ENCODE measurements at regions of chr20 and their contacts with region 1.

Region 1: GRCh38 chr20:62010551-62011402 is 54.9 kb downstream of the TAF4 start:
- DNase-seq: peak; percentile 61 to 74 (median 69)
- H3K4me3 ChIP-seq: no peak overlapping the region
- H3K27ac ChIP-seq: no peak overlapping the region
- H3K4me1 ChIP-seq: peaks cover 0 to 5% (median under 1%) of the 10 kb centered on the region in 4 experiments
- H3K27me3 ChIP-seq: no peaks in the 10 kb centered on the region

Region 2: GRCh38 chr20:61628901-61629601 is 381.7 kb before region 1 on chr20:
- CTCF ChIA-PET with region 1: no interaction called
- POLR2A ChIA-PET with region 1: no interaction called
- DNase-seq: no peak
- H3K4me3 ChIP-seq: no peak overlapping the region
- H3K27ac ChIP-seq: no peak overlapping the region
- H3K4me1 ChIP-seq: no peaks in the 10 kb centered on the region
- H3K27me3 ChIP-seq: no peaks in the 10 kb centered on the region

Region 3: DNA sequence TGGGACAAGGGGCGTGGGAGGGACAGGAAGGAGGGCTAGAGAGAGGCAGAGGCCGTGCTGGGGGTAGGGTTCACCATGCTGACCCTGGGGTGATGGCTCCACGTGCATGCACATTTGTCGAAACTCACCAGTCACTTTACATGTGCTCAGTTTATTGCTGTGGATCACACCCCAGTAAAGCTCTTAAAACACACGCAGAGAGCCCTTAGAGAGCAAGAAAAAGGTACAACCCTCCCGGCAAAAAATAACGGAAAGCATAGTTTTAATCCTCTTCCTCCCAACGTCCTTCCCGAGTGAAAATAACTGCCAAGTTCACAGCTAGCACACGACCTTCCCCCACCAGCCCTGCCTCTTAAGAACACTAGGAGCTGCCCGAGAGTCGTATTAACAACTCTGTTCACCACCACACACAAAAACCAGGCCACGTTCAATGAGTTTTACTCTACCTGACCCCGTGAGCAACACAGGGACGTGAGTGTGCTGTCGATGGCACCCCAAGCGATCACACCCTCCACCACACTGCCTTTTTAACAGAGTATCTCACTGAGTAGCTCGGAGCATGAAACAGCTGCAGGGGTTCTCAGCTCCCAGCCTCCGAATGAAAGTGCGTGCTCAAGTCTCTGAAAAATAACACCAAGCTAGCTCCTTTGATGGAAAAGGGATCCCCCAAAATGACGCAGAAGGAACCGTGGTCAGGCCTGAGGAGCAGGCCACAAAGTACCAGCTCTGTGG is 15.2 kb after region 1 on chr20:
- CTCF ChIA-PET with region 1: interaction called, 14 read pairs
- POLR2A ChIA-PET with region 1: no interaction called
- DNase-seq: peak; percentile 68 to 84 (median 82)
- H3K4me3 ChIP-seq: peak overlapping the region in 4 of 7 experiments; percentile 15 to 57 (median 26)
- H3K27ac ChIP-seq: peak overlapping the region; percentile 34 to 56
- H3K4me1 ChIP-seq: peaks cover 0 to 35% (median 25%) of the 10 kb centered on the region in 4 experiments
- H3K27me3 ChIP-seq: no peaks in the 10 kb centered on the region

Region 4: GRCh38 chr20:62143118-62143973 is 132.6 kb after region 1 on chr20 and contains the starts of genes PSMA7 and SS18L1:
- CTCF ChIA-PET with region 1: interaction called, 39 read pairs
- POLR2A ChIA-PET with region 1: no interaction called
- DNase-seq: peak; percentile 88 to 96 (median 94)
- H3K4me3 ChIP-seq: peak within 1 kb of the TSS; percentile 71 to 91 (median 79)
- H3K27ac ChIP-seq: peak within 1 kb of the TSS; percentile 66 to 86
- H3K4me1 ChIP-seq: peaks cover 9 to 33% (median 24%) of the 10 kb centered on the region in 4 experiments
- H3K27me3 ChIP-seq: no peaks in the 10 kb centered on the region

Region 5: DNA sequence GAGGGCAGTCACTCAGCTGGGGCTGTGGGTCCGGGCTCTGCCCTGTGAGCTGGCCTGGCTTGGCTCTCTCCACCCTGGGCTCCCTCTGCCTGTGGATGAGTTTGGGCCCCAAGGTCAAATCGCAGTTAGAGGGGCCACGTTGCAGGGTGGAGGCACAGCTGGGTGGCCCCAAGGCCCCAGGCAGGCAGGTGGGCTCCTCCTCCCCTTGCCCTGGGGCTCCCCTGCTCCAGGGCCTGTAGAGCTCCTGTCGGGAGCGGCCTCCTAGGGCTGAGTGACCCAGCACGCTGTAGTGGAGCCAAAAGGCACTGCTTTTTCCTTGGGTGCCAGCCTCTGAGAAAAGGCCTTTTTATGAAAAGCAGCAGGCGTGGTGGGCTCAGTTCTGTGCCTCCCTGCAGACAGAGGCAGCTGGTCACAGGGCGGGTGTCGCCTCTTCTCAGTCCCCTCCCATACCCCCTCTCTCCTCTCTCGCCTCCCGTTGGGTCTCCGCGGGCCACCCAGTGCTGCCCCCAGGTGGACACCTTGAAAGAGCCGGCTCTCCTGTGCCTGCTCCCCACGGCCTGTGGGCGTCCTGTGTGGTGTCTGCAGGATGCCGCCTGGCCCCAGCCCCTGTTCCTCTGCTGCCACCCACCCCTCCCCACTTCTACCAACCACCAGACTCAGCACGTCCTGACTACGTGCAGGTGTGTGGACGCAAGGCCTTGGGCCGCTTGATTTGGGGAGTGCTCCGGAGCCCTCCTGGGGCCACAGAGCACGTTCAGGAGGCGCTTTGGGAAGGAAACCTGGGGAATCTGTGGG is 146.0 kb after region 1 on chr20:
- CTCF ChIA-PET with region 1: interaction called, 26 read pairs
- POLR2A ChIA-PET with region 1: interaction called, 3 read pairs
- DNase-seq: peak; percentile 75 to 89 (median 89)
- H3K4me3 ChIP-seq: no peak overlapping the region
- H3K27ac ChIP-seq: no peak overlapping the region
- H3K4me1 ChIP-seq: peaks cover 0 to 6% (median 2%) of the 10 kb centered on the region in 4 experiments
- H3K27me3 ChIP-seq: no peaks in the 10 kb centered on the region

Measured in common myeloid progenitor, CD34-positive (primary cell).